T-cell (primary cell): ENCODE measurements at regions of chr4 and their contacts with region 1.

Region 1: DNA sequence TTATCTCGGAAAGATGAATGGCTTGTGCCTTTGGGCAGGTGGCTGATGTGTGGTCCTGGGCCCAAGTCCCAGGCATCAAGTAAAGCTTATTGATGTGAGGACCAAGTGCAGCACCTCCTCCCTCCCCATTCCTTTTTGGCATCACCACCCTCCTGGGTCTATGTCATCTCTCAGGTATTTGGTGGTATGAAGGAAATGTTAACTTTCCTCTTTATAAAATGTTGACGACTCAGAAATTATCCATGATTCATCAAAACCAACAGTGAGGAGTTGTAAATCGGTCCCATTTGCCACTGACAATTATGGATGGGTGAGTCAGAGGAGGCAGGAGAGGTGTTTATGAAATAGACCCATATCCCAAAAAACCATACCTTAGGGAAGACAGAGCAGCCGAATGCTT is 229.4 kb upstream of the GATB start:
- DNase-seq: no peak
- ATAC-seq: no peak
- H3K4me3 ChIP-seq: no peak overlapping the region
- H3K4me3 Mint-ChIP-seq: peak overlapping the region in 1 of 3 donors; percentile 74
- H3K27ac ChIP-seq: peak overlapping the region; percentile 52
- H3K27ac Mint-ChIP-seq: peak overlapping the region; percentile 90
- H3K4me1 ChIP-seq: peaks cover 36 to 45% of the 10 kb centered on the region in 2 experiments
- H3K4me1 Mint-ChIP-seq: peaks cover 57 to 61% (median 60%) of the 10 kb centered on the region in 3 donors
- H3K27me3 ChIP-seq: no peaks in the 10 kb centered on the region
- H3K27me3 Mint-ChIP-seq: no peaks in the 10 kb centered on the region

Region 2: GRCh38 chr4:152010710-152011079 is 20.5 kb after region 1 on chr4:
- CTCF ChIA-PET with region 1: no interaction called
- POLR2A ChIA-PET with region 1: interaction called in 1 of 2 experiments, 13 read pairs
- DNase-seq: peak in 33 of 35 experiments; percentile 4 to 63 (median 26)
- ATAC-seq: peak; percentile 64 to 98 (median 90)
- H3K4me3 ChIP-seq: no peak overlapping the region
- H3K4me3 Mint-ChIP-seq: peak overlapping the region; percentile 19 to 63 (median 32)
- H3K27ac ChIP-seq: peak overlapping the region; percentile 33
- H3K27ac Mint-ChIP-seq: peak overlapping the region; percentile 88 to 90
- H3K4me1 ChIP-seq: peaks cover 23 to 50% of the 10 kb centered on the region in 2 experiments
- H3K4me1 Mint-ChIP-seq: peaks cover 51 to 62% (median 61%) of the 10 kb centered on the region in 3 donors
- H3K27me3 ChIP-seq: no peaks in the 10 kb centered on the region
- H3K27me3 Mint-ChIP-seq: no peaks in the 10 kb centered on the region